ENCODE measurements at regions of chr6 and their contacts with region 1.

Region 1: DNA sequence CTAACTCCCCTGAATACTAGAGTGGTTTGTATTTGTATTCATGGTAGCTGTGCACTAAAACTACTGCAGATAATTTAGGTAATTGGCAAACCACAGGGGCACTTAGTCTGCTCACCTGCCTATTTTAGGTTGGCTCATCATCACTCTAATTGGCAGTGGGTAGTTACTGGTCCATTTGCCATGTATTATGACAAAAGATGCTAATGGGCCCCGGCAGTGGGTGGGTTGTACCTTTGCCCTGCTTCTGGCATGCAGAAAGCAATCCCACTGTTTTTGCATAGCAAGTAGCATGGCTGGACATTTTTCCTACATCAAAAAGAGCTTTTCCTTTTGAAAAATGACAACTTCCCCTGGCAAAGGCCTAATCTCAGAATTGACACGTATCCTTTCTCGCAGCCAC is 741.4 kb upstream of the MAP3K7 start:
- DNase-seq: no peak
- H3K4me3 Mint-ChIP-seq: no peak overlapping the region
- H3K27ac Mint-ChIP-seq: no peak overlapping the region
- H3K4me1 Mint-ChIP-seq: no peaks in the 10 kb centered on the region
- H3K27me3 Mint-ChIP-seq: peaks cover 10% of the 10 kb centered on the region
- CTCF ChIP-seq: no peak

Region 2: DNA sequence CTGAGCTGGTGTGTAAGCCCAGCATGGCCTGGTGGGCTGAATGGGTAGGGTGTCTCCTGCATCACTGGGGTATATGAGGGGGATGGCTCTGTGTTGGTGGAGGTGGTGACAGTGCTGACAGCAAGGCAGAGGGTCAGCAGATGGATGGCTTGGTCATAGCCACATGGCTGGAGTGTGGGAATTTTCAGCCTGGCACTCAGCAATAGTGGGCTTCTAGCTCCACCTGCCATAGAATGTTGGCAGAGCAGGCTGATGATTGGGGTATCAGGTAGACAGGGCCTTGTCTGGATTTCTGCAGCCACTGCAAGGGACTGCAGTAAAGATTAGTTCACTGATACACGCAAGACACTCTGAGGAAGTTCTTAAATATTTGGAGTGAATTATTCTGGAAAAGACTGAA is 894.1 kb before region 1 on chr6:
- CTCF ChIA-PET with region 1: no interaction called
- POLR2A ChIA-PET with region 1: no interaction called
- intact Hi-C with region 1: no loop called
- DNase-seq: no peak
- H3K4me3 Mint-ChIP-seq: no peak overlapping the region
- H3K27ac Mint-ChIP-seq: no peak overlapping the region
- H3K4me1 Mint-ChIP-seq: no peaks in the 10 kb centered on the region
- H3K27me3 Mint-ChIP-seq: no peaks in the 10 kb centered on the region
- CTCF ChIP-seq: peak; percentile 11

Region 3: DNA sequence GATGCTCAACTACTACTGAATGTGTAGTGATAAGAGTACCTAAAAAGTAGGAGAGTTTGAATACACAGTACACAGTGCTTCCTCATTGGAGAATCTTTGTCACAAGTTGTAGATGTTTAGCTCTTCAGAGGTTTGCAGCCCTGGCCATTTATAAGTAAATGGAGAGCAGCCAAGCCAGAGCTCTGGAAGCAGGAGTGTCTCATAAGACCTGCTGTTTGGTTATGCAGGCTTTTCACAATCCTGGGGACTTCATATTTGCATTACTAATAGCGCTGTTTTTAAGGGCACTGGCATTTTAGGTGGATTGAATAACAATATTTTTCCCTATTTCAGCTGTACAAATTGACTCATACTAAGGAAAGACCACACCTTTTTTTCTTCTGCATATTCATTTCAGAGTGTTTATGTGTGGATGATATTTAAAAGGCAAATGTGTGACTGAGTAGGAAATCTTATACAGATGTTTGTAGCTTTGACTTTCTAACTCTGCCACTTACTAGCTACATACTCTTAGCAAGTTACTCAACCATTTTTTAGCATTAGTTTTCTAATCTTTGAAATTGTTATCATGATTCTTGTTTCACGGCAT is 10.9 kb before region 1 on chr6:
- CTCF ChIA-PET with region 1: interaction called, 11 read pairs
- POLR2A ChIA-PET with region 1: no interaction called
- intact Hi-C with region 1: no loop called
- DNase-seq: no peak
- H3K4me3 Mint-ChIP-seq: no peak overlapping the region
- H3K27ac Mint-ChIP-seq: no peak overlapping the region
- H3K4me1 Mint-ChIP-seq: no peaks in the 10 kb centered on the region
- H3K27me3 Mint-ChIP-seq: no peaks in the 10 kb centered on the region
- CTCF ChIP-seq: no peak

Region 4: GRCh38 chr6:91340998-91341397 is 12.8 kb after region 1 on chr6:
- CTCF ChIA-PET with region 1: interaction called, 10 read pairs
- POLR2A ChIA-PET with region 1: interaction called, 4 read pairs
- intact Hi-C with region 1: no loop called
- DNase-seq: no peak
- H3K4me3 Mint-ChIP-seq: no peak overlapping the region
- H3K27ac Mint-ChIP-seq: no peak overlapping the region
- H3K4me1 Mint-ChIP-seq: no peaks in the 10 kb centered on the region
- H3K27me3 Mint-ChIP-seq: no peaks in the 10 kb centered on the region
- CTCF ChIP-seq: no peak

Region 5: GRCh38 chr6:92122746-92123145 is 794.5 kb after region 1 on chr6:
- CTCF ChIA-PET with region 1: interaction called, 15 read pairs
- POLR2A ChIA-PET with region 1: no interaction called
- intact Hi-C with region 1: no loop called
- DNase-seq: peak; percentile 43
- H3K4me3 Mint-ChIP-seq: no peak overlapping the region
- H3K27ac Mint-ChIP-seq: no peak overlapping the region
- H3K4me1 Mint-ChIP-seq: peaks cover 27% of the 10 kb centered on the region
- H3K27me3 Mint-ChIP-seq: no peaks in the 10 kb centered on the region
- CTCF ChIP-seq: peak; percentile 32

Region 6: GRCh38 chr6:92777146-92777740 is 1449.0 kb after region 1 on chr6:
- CTCF ChIA-PET with region 1: interaction called, 4 read pairs
- POLR2A ChIA-PET with region 1: no interaction called
- intact Hi-C with region 1: loop called (anchors 1 kb)
- DNase-seq: peak; percentile 49
- H3K4me3 Mint-ChIP-seq: no peak overlapping the region
- H3K27ac Mint-ChIP-seq: no peak overlapping the region
- H3K4me1 Mint-ChIP-seq: peaks cover 13% of the 10 kb centered on the region
- H3K27me3 Mint-ChIP-seq: peaks cover 18% of the 10 kb centered on the region
- CTCF ChIP-seq: peak; percentile 56

Measured in MCF 10A (cell line).